ENCODE measurements at regions of chr6 and their contacts with region 1.

Region 1: DNA sequence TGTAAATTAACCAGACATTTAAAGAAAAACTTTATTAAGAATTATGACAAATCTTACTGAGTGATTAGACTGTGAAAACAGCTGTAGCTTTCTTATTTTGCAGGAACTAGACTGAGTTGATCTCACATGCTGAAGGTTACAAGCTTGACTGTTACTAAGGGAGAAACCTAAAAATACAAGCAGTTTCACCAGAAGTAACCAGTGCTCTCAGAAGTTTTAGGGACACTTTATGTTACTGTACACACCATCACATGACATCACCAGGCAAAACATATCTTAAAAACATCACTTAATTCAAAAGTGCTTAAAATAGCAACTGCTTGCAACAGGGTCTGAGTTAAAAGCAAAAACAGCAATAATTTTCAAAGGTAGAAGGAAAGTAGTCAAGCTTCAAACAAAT is 5.4 kb downstream of the FBXO30 start:
- DNase-seq: no peak
- H3K4me3 ChIP-seq: no peak overlapping the region
- CTCF ChIP-seq: no peak
- POLR2A ChIP-seq: no peak

Region 2: GRCh38 chr6:145749632-145750031 is 59.6 kb before region 1 on chr6:
- intact Hi-C with region 1: loop called (anchors 10 kb)
- DNase-seq: no peak
- H3K4me3 ChIP-seq: no peak overlapping the region
- CTCF ChIP-seq: no peak
- POLR2A ChIP-seq: no peak

Measured in lower leg skin (tissue), 4 donors.